Activated CD8-positive, alpha-beta T cell treated with anti-CD3 and anti-CD28 coated beads for 36 hours (primary cell): ENCODE measurements at regions of chr7 and their contacts with region 1.

Region 1: GRCh38 chr7:142535123-142535779 is 214.0 kb upstream of the PRSS1 start:
- DNase-seq: peak; percentile 85
- ATAC-seq: peak; percentile 93
- H3K4me3 Mint-ChIP-seq: peak overlapping the region; percentile 60
- H3K27ac Mint-ChIP-seq: peak overlapping the region; percentile 84
- H3K4me1 Mint-ChIP-seq: peaks cover 29% of the 10 kb centered on the region
- H3K27me3 Mint-ChIP-seq: no peaks in the 10 kb centered on the region
- CTCF ChIP-seq: peak; percentile 58

Region 2: DNA sequence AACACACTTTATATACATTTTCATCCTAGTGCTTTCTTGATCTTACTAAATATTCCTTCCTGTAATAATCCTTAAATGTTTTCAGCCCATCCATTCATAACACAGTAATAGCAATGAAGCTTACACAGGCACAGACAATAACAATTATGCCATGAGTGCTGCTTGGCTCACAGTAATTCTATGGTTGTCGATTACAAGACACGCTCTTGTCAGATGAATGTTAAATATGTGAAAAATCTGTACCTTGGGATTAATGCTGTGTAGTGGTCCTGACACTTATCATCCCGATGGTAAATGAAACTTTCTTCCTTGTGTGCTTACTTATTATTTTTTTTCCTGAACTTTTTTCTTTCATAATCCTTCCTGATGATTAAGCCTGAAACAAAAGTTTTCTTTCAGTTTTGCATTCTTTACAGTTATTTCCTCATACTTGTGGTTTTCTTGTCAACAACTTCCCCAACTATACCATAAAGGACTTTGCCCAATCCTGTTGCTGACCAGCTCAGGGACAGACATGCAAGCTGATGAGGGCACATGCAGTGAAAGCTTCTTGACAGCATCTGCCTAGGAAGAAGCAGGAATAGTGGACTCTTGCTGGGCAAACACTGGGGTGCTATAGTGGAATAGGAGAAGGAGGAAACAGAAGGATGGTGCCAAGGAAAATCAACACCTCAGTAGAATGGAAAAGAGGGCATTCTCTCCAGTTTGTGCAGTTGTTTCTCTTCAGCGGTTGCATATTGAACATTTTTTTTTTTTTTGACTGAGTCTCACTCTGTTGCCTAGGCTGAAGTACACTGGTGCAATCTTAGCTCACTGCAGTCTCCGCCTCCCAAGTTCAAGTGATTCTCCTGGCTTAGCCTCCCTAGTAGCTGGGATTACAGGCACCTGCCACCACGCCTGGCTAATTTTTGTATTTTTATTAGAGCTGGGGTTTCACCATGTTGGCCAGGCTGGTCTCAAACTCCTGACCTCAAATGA is 430.4 kb before region 1 on chr7:
- CTCF ChIA-PET with region 1: no interaction called
- POLR2A ChIA-PET with region 1: no interaction called
- intact Hi-C with region 1: no loop called
- DNase-seq: no peak
- ATAC-seq: no peak
- H3K4me3 Mint-ChIP-seq: no peak overlapping the region
- H3K27ac Mint-ChIP-seq: no peak overlapping the region
- H3K4me1 Mint-ChIP-seq: no peaks in the 10 kb centered on the region
- H3K27me3 Mint-ChIP-seq: peaks cover 8% of the 10 kb centered on the region
- CTCF ChIP-seq: no peak

Region 3: GRCh38 chr7:142516038-142516501 is 19.2 kb before region 1 on chr7:
- CTCF ChIA-PET with region 1: interaction called, 15 read pairs
- POLR2A ChIA-PET with region 1: no interaction called
- intact Hi-C with region 1: no loop called
- DNase-seq: peak; percentile 49
- ATAC-seq: peak; percentile 80
- H3K4me3 Mint-ChIP-seq: no peak overlapping the region
- H3K27ac Mint-ChIP-seq: peak overlapping the region; percentile 35
- H3K4me1 Mint-ChIP-seq: peaks cover 35% of the 10 kb centered on the region
- H3K27me3 Mint-ChIP-seq: no peaks in the 10 kb centered on the region
- CTCF ChIP-seq: peak; percentile 75

Region 4: GRCh38 chr7:142523821-142524460 is 11.3 kb before region 1 on chr7:
- CTCF ChIA-PET with region 1: interaction called, 32 read pairs
- POLR2A ChIA-PET with region 1: no interaction called
- intact Hi-C with region 1: no loop called
- DNase-seq: no peak
- ATAC-seq: no peak
- H3K4me3 Mint-ChIP-seq: no peak overlapping the region
- H3K27ac Mint-ChIP-seq: no peak overlapping the region
- H3K4me1 Mint-ChIP-seq: peaks cover 13% of the 10 kb centered on the region
- H3K27me3 Mint-ChIP-seq: no peaks in the 10 kb centered on the region
- CTCF ChIP-seq: no peak

Region 5: GRCh38 chr7:142546452-142546851 is 11.2 kb after region 1 on chr7:
- CTCF ChIA-PET with region 1: interaction called, 11 read pairs
- POLR2A ChIA-PET with region 1: interaction called, 3 read pairs
- intact Hi-C with region 1: no loop called
- DNase-seq: no peak
- ATAC-seq: no peak
- H3K4me3 Mint-ChIP-seq: no peak overlapping the region
- H3K27ac Mint-ChIP-seq: no peak overlapping the region
- H3K4me1 Mint-ChIP-seq: no peaks in the 10 kb centered on the region
- H3K27me3 Mint-ChIP-seq: no peaks in the 10 kb centered on the region
- CTCF ChIP-seq: no peak

Region 6: DNA sequence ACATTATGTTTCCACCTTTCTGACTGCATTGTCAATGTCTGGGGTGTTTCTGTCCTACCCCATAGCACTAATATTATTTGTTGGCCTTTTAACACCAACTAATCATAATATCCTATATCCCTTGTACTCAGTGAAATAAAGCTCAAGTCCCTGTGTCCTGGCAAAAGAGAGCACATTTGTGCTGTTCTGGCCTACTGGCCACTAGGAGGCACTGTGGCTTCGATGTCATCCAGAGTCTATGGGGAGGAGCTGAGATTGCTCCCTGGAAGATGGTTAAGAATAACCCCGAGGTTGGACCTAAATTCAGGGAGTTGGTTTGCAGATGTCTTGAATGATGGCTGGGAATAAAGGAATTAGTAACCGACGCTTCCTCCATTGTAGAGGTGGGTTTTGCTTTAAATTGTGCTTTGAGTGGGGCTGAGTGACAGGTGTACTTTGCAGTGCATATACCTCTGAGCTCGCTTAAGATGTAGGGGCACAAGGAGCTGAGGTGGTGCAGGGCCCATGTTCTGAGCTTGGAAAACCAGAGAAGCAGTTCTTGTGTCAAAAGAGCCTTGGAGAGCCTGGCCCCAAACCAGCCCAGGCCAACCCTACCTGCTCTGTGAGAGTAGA is 22.8 kb after region 1 on chr7:
- CTCF ChIA-PET with region 1: interaction called, 39 read pairs
- POLR2A ChIA-PET with region 1: interaction called, 4 read pairs
- intact Hi-C with region 1: no loop called
- DNase-seq: peak; percentile 67
- ATAC-seq: peak; percentile 88
- H3K4me3 Mint-ChIP-seq: peak overlapping the region; percentile 37
- H3K27ac Mint-ChIP-seq: peak overlapping the region; percentile 1
- H3K4me1 Mint-ChIP-seq: no peaks in the 10 kb centered on the region
- H3K27me3 Mint-ChIP-seq: peaks cover 5% of the 10 kb centered on the region
- CTCF ChIP-seq: peak; percentile 65

Region 7: DNA sequence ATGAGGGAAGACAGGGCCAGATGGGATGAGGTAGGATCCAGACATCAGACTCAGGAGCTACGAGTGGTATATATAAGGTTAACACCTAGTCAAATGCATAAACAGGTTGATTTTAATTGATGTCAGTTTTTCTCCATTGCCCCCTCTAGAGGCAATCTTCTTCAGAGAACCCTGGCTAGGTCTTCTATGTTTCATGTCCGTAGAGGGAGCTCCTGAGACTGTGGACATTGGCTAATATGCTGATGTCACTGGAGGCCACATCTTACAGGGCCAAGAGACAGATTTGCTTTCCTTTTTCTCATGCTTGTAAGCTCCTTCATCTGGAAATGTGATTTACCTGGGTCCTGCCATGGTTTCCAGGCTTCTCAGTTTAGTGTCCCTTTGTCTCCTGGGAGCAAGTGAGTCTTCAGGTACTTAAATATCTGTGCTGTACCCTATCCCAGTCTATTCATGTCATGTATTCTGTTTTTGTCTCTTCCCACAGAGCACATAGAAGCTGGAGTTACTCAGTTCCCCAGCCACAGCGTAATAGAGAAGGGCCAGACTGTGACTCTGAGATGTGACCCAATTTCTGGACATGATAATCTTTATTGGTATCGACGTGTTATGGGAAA is 52.4 kb after region 1 on chr7:
- CTCF ChIA-PET with region 1: interaction called, 20 read pairs
- POLR2A ChIA-PET with region 1: no interaction called
- intact Hi-C with region 1: loop called (anchors 10 kb)
- DNase-seq: no peak
- ATAC-seq: peak; percentile 79
- H3K4me3 Mint-ChIP-seq: peak overlapping the region; percentile 45
- H3K27ac Mint-ChIP-seq: peak overlapping the region; percentile 52
- H3K4me1 Mint-ChIP-seq: peaks cover 8% of the 10 kb centered on the region
- H3K27me3 Mint-ChIP-seq: no peaks in the 10 kb centered on the region
- CTCF ChIP-seq: peak; percentile 60

Region 8: DNA sequence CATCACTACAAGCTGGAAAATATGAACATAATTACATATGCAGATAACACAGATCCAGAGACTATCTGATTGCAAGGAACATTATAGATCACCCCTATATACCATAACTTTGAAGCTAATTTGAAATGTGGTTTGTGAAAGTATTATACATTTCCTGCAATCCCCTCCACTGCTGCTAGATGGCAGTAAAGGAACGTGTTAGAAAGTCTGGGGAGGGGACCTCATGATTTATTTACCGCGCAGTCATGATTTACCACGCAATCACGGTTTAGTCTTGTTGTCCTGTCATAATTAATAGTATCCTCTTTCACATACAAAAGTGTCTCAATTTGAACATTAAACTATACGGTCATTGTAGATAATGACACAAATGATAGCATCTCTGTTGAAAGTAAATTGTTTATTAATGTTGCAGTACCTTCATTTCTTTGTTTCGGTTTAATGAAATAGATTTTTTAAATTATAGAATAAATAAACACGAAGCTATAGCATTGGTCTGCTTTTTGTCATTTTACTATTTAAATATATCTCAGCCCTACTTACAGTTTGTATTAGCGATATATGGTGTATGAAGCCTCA is 68.7 kb after region 1 on chr7:
- CTCF ChIA-PET with region 1: interaction called, 19 read pairs
- POLR2A ChIA-PET with region 1: no interaction called
- intact Hi-C with region 1: no loop called
- DNase-seq: peak; percentile 70
- ATAC-seq: peak; percentile 65
- H3K4me3 Mint-ChIP-seq: peak overlapping the region; percentile 20
- H3K27ac Mint-ChIP-seq: no peak overlapping the region
- H3K4me1 Mint-ChIP-seq: peaks cover 9% of the 10 kb centered on the region
- H3K27me3 Mint-ChIP-seq: no peaks in the 10 kb centered on the region
- CTCF ChIP-seq: peak; percentile 69